HCT116 (cell line): ENCODE measurements at regions of chr5 and their contacts with region 1.

Region 1: GRCh38 chr5:132506094-132506692 is 15.6 kb upstream of the IRF1 start:
- DNase-seq: peak; percentile 35
- ATAC-seq: peak; percentile 85
- H3K4me3 ChIP-seq: no peak overlapping the region
- H3K27ac ChIP-seq: no peak overlapping the region
- H3K4me1 ChIP-seq: peaks cover 8 to 32% of the 10 kb centered on the region in 2 experiments
- H3K27me3 ChIP-seq: no peaks in the 10 kb centered on the region
- CTCF ChIP-seq: peak in 2 of 3 experiments; percentile 69 to 70; a peak in 4 of 6 replicates
- POLR2A ChIP-seq: no peak
- RAD21 ChIP-seq: no peak

Region 2: DNA sequence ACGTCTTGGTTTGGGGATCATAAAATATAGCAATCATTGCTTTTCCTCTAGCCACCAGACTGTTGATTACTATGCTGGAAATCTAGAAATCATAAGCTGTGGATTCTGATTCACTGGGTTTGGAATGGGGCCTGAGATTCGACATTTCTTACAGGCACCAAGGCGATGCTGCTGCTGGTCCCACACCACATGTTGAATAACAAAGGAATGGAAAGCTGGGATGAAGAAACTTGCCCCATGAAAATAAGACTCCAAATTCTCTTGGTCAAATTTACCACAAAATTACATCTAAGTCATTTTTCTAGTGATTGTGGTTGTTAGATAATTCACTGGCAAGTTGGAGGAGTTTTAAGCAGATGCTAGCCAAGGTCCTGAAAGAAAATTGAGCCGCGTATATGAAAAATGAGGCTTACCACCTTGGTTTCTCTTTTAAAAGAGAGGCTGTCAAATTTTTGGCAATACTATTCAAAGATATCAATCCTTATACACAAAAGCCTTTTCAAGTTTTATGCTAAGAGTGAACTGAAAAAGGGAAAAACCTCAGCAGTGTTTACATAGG is 537.7 kb before region 1 on chr5:
- CTCF ChIA-PET with region 1: no interaction called
- POLR2A ChIA-PET with region 1: no interaction called
- RAD21 ChIA-PET with region 1: no interaction called
- intact Hi-C with region 1: no loop called
- DNase-seq: no peak
- ATAC-seq: no peak
- H3K4me3 ChIP-seq: no peak overlapping the region
- H3K27ac ChIP-seq: no peak overlapping the region
- H3K4me1 ChIP-seq: no peaks in the 10 kb centered on the region
- H3K27me3 ChIP-seq: no peaks in the 10 kb centered on the region
- CTCF ChIP-seq: no peak
- POLR2A ChIP-seq: no peak
- RAD21 ChIP-seq: no peak

Region 3: GRCh38 chr5:132663771-132664695 is 157.8 kb after region 1 on chr5:
- CTCF ChIA-PET with region 1: no interaction called
- POLR2A ChIA-PET with region 1: no interaction called
- RAD21 ChIA-PET with region 1: no interaction called
- intact Hi-C with region 1: no loop called
- DNase-seq: no peak
- ATAC-seq: no peak
- H3K4me3 ChIP-seq: no peak overlapping the region
- H3K27ac ChIP-seq: no peak overlapping the region
- H3K4me1 ChIP-seq: peaks cover 0 to 13% of the 10 kb centered on the region in 2 experiments; a peak in 1 of 4 replicates
- H3K27me3 ChIP-seq: no peaks in the 10 kb centered on the region
- CTCF ChIP-seq: no peak
- POLR2A ChIP-seq: no peak
- RAD21 ChIP-seq: no peak

Region 4: GRCh38 chr5:132674671-132675506 is 168.7 kb after region 1 on chr5:
- CTCF ChIA-PET with region 1: interaction called, 10 read pairs
- POLR2A ChIA-PET with region 1: no interaction called
- RAD21 ChIA-PET with region 1: no interaction called
- intact Hi-C with region 1: no loop called
- DNase-seq: peak; percentile 26
- ATAC-seq: no peak
- H3K4me3 ChIP-seq: 0 out of 4 replicates have a peak overlapping the region, but pooled peaks of 1 of the 2 experiments have one; percentile 1
- H3K27ac ChIP-seq: no peak overlapping the region
- H3K4me1 ChIP-seq: peaks cover 24 to 34% of the 10 kb centered on the region in 2 experiments
- H3K27me3 ChIP-seq: no peaks in the 10 kb centered on the region
- CTCF ChIP-seq: no peak
- POLR2A ChIP-seq: no peak
- RAD21 ChIP-seq: no peak